Common myeloid progenitor, CD34-positive (primary cell): ENCODE measurements at regions of chr1 and their contacts with region 1.

Region 1: GRCh38 chr1:161506336-161507223 is 1.3 kb downstream of the FCGR2A start:
- DNase-seq: peak; percentile 47 to 86 (median 85)
- H3K4me3 ChIP-seq: peak overlapping the region in 4 of 7 experiments; percentile 20 to 43 (median 32)
- H3K27ac ChIP-seq: peak overlapping the region in 1 of 2 experiments; percentile 68
- H3K4me1 ChIP-seq: peaks cover 6 to 47% (median 25%) of the 10 kb centered on the region in 4 experiments
- H3K27me3 ChIP-seq: peaks cover 0 to 10% (median 0%) of the 10 kb centered on the region in 5 experiments

Region 2: GRCh38 chr1:161486806-161487741 is 19.5 kb before region 1 on chr1:
- CTCF ChIA-PET with region 1: interaction called, 12 read pairs
- POLR2A ChIA-PET with region 1: no interaction called
- DNase-seq: peak; percentile 72 to 86 (median 79)
- H3K4me3 ChIP-seq: no peak overlapping the region
- H3K27ac ChIP-seq: peak overlapping the region in 1 of 2 experiments; percentile 7
- H3K4me1 ChIP-seq: peaks cover 7 to 16% (median 12%) of the 10 kb centered on the region in 4 experiments
- H3K27me3 ChIP-seq: peaks cover 0 to 59% (median 12%) of the 10 kb centered on the region in 5 experiments

Region 3: DNA sequence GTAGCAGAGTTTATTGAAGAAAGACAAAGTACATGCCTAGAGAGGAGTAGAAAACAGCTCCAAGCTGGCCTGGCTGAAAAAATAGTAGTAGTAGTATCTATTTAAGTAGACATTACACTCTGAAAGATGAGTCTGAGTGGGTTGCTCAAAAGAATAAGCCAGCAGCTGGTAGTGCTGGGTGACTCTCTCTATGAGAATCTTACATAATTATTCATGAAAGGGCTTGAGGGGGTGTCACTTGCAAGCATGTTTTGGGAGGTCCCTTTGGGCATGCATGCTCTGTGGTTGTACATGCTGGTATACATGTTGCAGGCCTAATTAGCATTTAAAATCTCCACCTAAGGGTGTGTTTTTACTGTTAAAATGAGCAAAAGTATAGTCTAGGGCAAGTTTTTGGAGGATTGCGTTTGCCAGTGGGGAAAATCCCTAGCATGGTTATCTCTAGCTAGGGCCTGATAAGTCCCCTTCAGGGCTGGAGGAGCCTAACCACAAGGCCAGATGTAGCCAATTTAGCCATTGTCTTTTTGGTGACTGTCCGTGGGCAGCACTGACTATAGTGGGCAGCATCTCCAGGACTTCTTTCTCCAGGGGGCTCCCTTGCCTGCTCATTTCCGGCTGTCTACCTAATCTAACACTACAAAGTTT is 12.4 kb before region 1 on chr1:
- CTCF ChIA-PET with region 1: interaction called, 11 read pairs
- POLR2A ChIA-PET with region 1: no interaction called
- DNase-seq: no peak
- H3K4me3 ChIP-seq: no peak overlapping the region
- H3K27ac ChIP-seq: no peak overlapping the region
- H3K4me1 ChIP-seq: peaks cover 7 to 27% (median 11%) of the 10 kb centered on the region in 4 experiments
- H3K27me3 ChIP-seq: peaks cover 0 to 58% (median 23%) of the 10 kb centered on the region in 5 experiments